Activated CD8-positive, alpha-beta memory T cell treated with anti-CD3 and anti-CD28 coated beads, Interleukin-2, amount 10 ng/mL, durations not matched to agents 7 days and 5 days (primary cell): ENCODE measurements at regions of chr4 and their contacts with region 1.

Region 1: DNA sequence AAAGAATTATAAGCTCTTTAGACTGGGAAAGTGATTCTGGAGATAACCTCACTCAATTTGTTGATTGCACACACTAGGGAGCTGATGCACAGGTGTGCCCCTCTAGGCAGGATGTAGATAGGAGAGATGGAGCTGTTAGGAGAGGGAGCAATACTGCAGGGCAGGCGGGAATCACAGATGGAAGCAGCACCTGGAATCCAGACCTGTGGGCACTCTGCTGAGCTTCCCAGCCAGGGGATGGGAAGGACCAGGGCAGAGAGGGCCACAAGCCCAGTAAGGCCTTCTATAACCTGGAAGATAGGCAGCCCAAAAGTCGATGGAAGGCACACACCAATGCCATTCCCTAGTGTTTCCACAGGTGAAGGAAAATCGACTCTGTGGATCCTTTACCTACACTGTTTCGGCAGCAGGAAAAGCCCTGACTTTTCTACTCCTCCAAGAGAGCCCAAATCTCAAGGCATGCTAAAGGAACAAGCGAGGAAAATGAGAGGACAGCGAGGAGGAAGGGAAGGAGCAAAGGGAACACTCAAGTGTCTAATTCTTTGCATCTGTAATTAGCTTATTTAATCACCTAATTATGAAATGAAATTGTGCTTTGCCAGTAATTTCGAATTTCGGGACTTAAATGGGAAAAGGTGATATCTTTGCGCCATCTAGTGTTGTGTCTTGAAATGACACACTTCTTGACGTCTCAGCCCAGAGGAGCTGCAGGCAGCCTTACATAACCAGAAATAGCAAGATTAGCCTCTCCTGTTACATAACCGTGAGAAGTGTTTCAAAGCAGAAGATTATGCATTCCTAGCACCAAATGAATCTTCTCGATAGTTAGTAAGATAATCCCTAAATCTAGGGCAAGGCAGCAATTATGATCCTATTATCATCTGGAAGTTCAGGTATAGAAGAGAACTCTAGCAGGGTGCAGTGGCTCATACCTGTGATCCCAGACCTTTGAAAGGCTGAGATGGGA is 31.0 kb upstream of the TLR3 start:
- DNase-seq: no peak
- ATAC-seq: no peak
- H3K4me3 Mint-ChIP-seq: no peak overlapping the region
- H3K27ac Mint-ChIP-seq: no peak overlapping the region
- H3K4me1 Mint-ChIP-seq: no peaks in the 10 kb centered on the region
- H3K27me3 Mint-ChIP-seq: peaks cover 26% of the 10 kb centered on the region

Region 2: DNA sequence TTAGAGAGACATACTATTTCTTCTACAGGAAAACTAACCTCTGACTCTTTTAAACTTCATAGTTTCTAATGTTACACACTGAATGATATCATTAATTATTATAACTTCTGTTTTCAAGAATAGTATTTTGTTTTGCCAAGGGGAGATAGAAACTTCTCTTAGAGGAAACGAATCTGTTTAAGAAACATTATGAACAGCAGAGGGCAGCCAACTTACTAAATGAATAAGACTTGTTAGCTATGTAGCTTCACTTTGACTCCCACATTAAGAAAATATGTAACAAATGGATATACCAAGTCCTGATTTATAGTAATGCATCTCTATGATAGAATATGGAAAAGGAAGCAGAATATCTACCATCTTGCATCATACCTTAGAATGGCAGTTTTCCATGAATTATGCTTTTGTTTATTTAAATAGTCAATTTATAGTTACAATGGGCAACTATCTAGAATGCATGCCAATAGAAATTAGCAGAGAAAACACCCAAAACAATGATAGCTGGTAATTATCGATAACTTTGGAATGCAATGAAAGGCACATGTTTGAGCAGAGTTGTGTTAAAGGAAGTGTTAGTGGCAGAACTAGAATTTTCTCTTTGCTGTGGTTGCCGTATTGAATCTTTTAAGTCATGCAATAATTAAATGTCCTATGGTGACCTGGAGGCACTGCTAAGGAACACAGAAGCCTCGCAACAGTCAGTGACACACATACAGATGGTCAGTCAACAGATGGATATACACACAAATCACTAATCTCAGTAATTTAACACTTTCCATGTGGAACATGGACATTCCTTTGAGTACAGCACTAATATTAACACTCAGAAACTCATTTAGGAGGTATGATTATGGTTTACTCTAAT is 396.9 kb before region 1 on chr4:
- CTCF ChIA-PET with region 1: interaction called, 10 read pairs
- DNase-seq: no peak
- ATAC-seq: no peak
- H3K4me3 Mint-ChIP-seq: no peak overlapping the region
- H3K27ac Mint-ChIP-seq: no peak overlapping the region
- H3K4me1 Mint-ChIP-seq: peaks cover 3% of the 10 kb centered on the region
- H3K27me3 Mint-ChIP-seq: peaks cover 50% of the 10 kb centered on the region